Heart right ventricle (tissue), 16 donors: ENCODE measurements at regions of chr16 and their contacts with region 1.

Region 1: GRCh38 chr16:55323637-55324490 is at the start of gene IRX6:
- DNase-seq: peak; percentile 68 to 71
- ATAC-seq: peak; percentile 75 to 91 (median 83)
- H3K4me3 ChIP-seq: peak within 1 kb of the TSS; percentile 23 to 64 (median 49)
- H3K27ac ChIP-seq: peak within 1 kb of the TSS in 8 of 10 donors; percentile 74 to 97 (median 92)
- H3K4me1 ChIP-seq: peaks cover 0 to 35% (median 7%) of the 10 kb centered on the region in 9 donors
- H3K27me3 ChIP-seq: peaks cover 4 to 92% (median 65%) of the 10 kb centered on the region in 7 donors
- CTCF ChIP-seq: peak in 8 of 9 donors; percentile 44 to 82 (median 64)
- total RNA-seq, gene IRX6: 0.18 to 28.1 (median 14.3) TPM

Region 2: DNA sequence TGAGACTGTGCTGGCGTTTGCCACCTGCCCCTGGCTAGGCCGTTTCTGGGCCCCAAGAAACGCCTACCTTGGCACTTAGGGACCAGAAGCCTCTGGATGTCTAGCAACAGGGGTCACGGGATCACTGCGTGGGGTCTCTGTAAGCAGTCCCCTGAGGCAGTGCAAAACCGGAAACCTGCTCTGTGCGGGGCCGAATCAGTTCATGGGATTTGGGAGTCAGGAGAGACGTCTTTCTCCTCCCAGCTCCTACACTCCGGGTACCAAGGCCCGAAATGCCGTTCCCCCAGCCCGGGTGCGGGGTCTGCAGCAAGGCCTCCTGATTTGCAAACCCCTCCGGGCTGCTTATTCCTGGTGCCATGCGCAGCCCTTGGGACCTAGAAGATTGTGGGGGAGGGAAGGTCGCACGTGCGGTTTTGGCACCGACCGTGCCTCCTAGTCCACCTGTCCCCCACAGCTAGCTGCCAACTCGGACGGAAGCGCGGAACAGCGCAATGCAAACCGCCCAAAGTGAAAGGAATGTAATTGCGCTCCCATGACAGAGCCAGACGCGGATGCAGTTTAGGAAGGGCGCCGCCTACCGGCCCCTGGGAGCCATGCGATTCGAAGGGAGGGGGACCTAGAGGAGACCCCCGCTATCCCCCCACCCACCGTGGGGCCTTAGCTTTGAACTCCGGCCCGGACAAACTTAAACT is 386.7 kb before region 1 on chr16:
- intact Hi-C with region 1: loop called in 3 of 10 experiments (anchors 5 to 10 kb)
- DNase-seq: peak; percentile 38 to 52
- ATAC-seq: peak; percentile 30 to 73 (median 58)
- H3K4me3 ChIP-seq: peak overlapping the region; percentile 17 to 90 (median 68)
- H3K27ac ChIP-seq: peak overlapping the region; percentile 14 to 96 (median 64)
- H3K4me1 ChIP-seq: peaks cover 3 to 46% (median 36%) of the 10 kb centered on the region in 9 donors
- H3K27me3 ChIP-seq: peaks cover 0 to 100% (median 88%) of the 10 kb centered on the region in 7 donors
- CTCF ChIP-seq: peak; percentile 36 to 73 (median 70)

Region 3: DNA sequence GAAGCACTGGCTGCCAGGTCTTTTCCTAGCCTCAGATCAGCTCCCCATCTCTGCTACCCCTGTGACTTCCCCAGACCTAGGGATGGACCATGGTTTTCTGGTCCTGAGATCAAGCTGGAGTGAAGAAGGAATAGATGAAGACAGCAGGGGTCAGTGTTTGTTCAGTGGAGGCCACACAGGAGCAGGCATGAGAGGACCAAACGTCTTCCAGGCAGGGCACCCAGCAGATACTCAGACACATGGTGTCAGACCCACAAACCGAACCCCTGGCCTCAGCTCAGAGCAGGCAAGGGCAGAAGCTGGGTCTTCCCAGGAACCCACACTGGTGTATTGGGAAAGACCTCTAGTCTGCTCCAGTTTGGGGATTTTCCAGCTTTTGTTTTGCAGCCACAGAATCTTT is 203.5 kb before region 1 on chr16:
- intact Hi-C with region 1: loop called in 2 of 10 experiments (anchors 5 to 10 kb)
- DNase-seq: peak in 1 of 2 donors; percentile 8
- ATAC-seq: peak; percentile 28 to 81 (median 68)
- H3K4me3 ChIP-seq: no peak overlapping the region
- H3K27ac ChIP-seq: no peak overlapping the region
- H3K4me1 ChIP-seq: no peaks in the 10 kb centered on the region
- H3K27me3 ChIP-seq: no peaks in the 10 kb centered on the region
- CTCF ChIP-seq: peak in 5 of 9 donors; percentile 9 to 39 (median 28)

Region 4: GRCh38 chr16:55271945-55272513 is 51.8 kb before region 1 on chr16:
- intact Hi-C with region 1: loop called in 1 of 10 experiments (anchors 5 kb)
- DNase-seq: peak; percentile 19 to 27
- ATAC-seq: peak; percentile 17 to 97 (median 94)
- H3K4me3 ChIP-seq: no peak overlapping the region
- H3K27ac ChIP-seq: peak overlapping the region in 3 of 10 donors; percentile 55 to 71 (median 64)
- H3K4me1 ChIP-seq: peaks cover 0 to 6% (median 0%) of the 10 kb centered on the region in 9 donors
- H3K27me3 ChIP-seq: no peaks in the 10 kb centered on the region
- CTCF ChIP-seq: no peak

Region 5: DNA sequence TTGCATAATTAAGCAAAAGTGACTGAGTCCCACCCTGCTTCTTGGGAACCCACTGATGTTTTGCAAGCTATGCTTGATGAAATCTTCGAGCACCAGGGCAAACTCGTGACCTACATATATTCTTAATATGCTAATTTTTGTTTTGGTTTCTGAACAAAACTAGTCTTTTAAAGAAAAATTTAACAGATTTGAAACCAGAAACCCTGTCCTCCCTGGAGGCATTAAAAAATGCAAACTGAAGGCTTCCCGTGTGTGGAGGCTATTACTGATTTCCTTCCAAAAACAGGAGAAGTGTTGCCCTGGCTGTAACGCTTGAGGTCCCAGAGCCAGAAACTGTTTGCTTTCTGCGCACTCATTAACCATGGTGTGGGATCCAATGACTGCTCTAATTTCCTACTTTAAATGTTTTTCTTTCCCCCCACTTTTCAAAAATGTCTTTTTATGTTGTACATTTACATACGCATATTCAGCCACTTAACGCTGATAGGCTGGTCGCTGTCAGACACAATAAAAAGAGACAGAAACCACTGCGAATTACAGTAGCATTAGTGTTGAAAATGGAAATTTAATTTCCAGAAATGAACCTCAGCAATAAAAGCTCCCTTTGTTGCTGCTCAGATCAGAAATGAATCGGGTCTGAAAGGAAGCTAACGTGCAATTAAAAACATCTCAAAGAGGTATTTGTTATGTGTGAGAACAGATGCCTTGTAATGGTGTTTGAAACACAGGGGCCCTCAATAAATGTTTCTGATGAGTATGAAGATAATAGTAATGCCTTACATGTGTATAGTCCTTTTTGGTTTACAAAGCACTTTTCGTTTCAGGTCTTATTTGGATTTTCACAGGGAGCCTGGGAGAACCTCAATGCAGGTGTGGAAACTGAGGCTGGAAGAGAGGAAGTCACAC is 39.8 kb before region 1 on chr16:
- intact Hi-C with region 1: no loop called
- DNase-seq: no peak
- ATAC-seq: no peak
- H3K4me3 ChIP-seq: no peak overlapping the region
- H3K27ac ChIP-seq: no peak overlapping the region
- H3K4me1 ChIP-seq: no peaks in the 10 kb centered on the region
- H3K27me3 ChIP-seq: peaks cover 0 to 19% (median 4%) of the 10 kb centered on the region in 7 donors
- CTCF ChIP-seq: no peak

Region 6: GRCh38 chr16:56373003-56373402 is 1049.1 kb after region 1 on chr16:
- intact Hi-C with region 1: no loop called
- DNase-seq: no peak
- ATAC-seq: peak in 1 of 8 donors; percentile 36
- H3K4me3 ChIP-seq: no peak overlapping the region
- H3K27ac ChIP-seq: no peak overlapping the region
- H3K4me1 ChIP-seq: peaks cover 0 to 23% (median 18%) of the 10 kb centered on the region in 9 donors
- H3K27me3 ChIP-seq: no peaks in the 10 kb centered on the region
- CTCF ChIP-seq: no peak